ENCODE measurements at regions of chr1 and their contacts with region 1.

Region 1: DNA sequence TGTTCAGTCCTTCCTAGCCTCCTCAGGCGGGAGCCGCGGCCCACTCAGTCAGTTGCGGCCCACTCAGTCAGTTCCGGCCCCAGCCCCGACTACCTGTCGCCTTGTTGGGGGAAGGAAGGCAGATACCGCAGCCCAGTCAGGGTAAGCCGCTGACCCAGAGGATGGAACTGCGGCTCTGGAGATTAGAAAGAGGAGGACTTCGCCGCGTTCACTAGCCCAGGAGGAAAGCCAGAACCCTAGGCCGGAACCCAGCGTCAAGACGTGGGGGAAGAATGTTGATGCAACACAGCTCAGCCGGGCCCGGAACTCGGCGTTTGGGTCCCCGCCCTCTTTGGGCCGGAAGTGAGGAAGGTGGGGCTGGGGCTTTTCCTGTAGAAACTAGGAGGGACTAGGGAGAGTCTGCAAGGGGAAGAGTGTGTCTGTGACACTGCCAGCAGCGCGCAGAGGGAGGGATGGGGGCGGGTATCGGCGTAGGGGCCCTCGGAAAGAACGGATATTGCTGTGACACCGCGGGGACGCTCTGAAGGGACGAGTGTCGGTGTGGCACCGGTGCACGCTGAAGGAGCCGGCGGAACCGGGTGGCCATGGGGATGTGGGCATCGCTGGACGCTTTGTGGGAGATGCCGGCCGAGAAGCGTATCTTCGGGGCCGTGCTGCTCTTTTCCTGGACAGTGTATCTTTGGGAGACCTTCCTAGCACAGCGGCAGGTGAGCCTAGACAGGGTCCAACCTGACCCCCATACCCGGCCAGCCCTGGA is at the start of gene ZMPSTE24:
- DNase-seq: peak; percentile 92 to 99 (median 93)
- ATAC-seq: peak; percentile 98
- H3K4me3 ChIP-seq: peak within 1 kb of the TSS; percentile 95
- H3K27ac ChIP-seq: peak within 1 kb of the TSS; percentile 97
- H3K4me1 ChIP-seq: peaks cover 0 to 6% of the 10 kb centered on the region in 2 experiments; a peak in 4 of 5 replicates
- H3K27me3 ChIP-seq: no peaks in the 10 kb centered on the region; a peak in 1 of 5 replicates
- CTCF ChIP-seq: peak in 1 of 3 experiments; percentile 11; a peak in 2 of 6 replicates
- EP300 ChIP-seq: peak; percentile 75
- POLR2A ChIP-seq: peak; percentile 96
- RAD21 ChIP-seq: 0 out of 4 replicates have a peak, but pooled peaks of 1 of the 2 experiments have one; percentile 6
- polyA plus RNA-seq, gene ZMPSTE24: 73.5 to 75.9 TPM

Region 2: GRCh38 chr1:40161125-40161887 is 96.6 kb before region 1 on chr1 and contains the start of gene RLF:
- CTCF ChIA-PET with region 1: no interaction called
- POLR2A ChIA-PET with region 1: interaction called, 5 read pairs
- in situ Hi-C with region 1: no loop called
- intact Hi-C with region 1: loop called (anchors 2 kb)
- DNase-seq: peak; percentile 93 to 98 (median 95)
- ATAC-seq: peak; percentile 92
- H3K4me3 ChIP-seq: peak within 1 kb of the TSS; percentile 94
- H3K27ac ChIP-seq: peak within 1 kb of the TSS; percentile 89
- H3K4me1 ChIP-seq: peaks cover 4 to 24% of the 10 kb centered on the region in 2 experiments
- H3K27me3 ChIP-seq: no peaks in the 10 kb centered on the region
- CTCF ChIP-seq: peak in 1 of 3 experiments; percentile 12; a peak in 1 of 6 replicates
- EP300 ChIP-seq: peak; percentile 70
- POLR2A ChIP-seq: peak; percentile 95
- RAD21 ChIP-seq: no peak
- polyA plus RNA-seq, gene RLF: 3.6 to 5.6 TPM

Region 3: GRCh38 chr1:40247655-40248054 is 10.2 kb before region 1 on chr1 and contains the start of gene TMCO2:
- CTCF ChIA-PET with region 1: no interaction called
- POLR2A ChIA-PET with region 1: interaction called, 23 read pairs
- in situ Hi-C with region 1: no loop called
- intact Hi-C with region 1: no loop called
- DNase-seq: no peak
- ATAC-seq: no peak
- H3K4me3 ChIP-seq: no peak within 1 kb of the TSS
- H3K27ac ChIP-seq: no peak within 1 kb of the TSS
- H3K4me1 ChIP-seq: peaks cover 0 to 3% of the 10 kb centered on the region in 2 experiments; a peak in 2 of 5 replicates
- H3K27me3 ChIP-seq: no peaks in the 10 kb centered on the region
- CTCF ChIP-seq: no peak
- EP300 ChIP-seq: no peak
- POLR2A ChIP-seq: no peak
- RAD21 ChIP-seq: no peak
- polyA plus RNA-seq, gene TMCO2: not detected

Region 4: DNA sequence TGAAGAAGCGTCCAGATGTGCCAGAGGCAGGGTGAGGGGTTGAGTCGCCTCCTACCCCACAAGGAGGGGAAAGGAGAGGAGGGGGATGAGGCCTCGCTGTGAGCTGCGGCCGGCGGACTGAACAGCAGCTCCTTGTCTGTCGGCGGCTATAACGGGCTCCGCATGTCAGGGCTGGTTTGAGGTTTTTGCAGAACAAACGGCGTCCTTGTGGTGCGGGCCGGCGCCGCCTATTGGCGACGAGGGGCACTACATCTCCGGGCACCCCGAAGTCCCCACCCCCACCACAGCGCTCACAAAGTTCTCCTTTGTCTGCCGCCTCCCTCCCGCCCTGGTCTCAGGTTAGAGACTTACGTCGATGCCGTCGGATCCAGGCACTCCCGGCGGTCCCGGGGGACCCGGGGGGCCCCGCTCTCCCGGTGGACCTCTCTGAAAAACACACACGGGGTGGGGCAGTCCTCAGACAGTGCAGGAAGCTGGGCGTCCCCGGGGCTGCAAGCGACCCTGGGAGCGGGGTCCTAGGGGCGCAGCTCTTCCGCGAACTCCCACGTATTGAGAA is 57.5 kb after region 1 on chr1:
- CTCF ChIA-PET with region 1: no interaction called
- POLR2A ChIA-PET with region 1: no interaction called
- in situ Hi-C with region 1: no loop called
- intact Hi-C with region 1: no loop called
- DNase-seq: peak; percentile 90 to 93 (median 90)
- ATAC-seq: peak; percentile 87
- H3K4me3 ChIP-seq: no peak overlapping the region
- H3K27ac ChIP-seq: peak overlapping the region; percentile 31; the same call in 1 of the 3 replicates
- H3K4me1 ChIP-seq: peaks cover 36 to 67% of the 10 kb centered on the region in 2 experiments
- H3K27me3 ChIP-seq: no peaks in the 10 kb centered on the region
- CTCF ChIP-seq: peak; percentile 93 to 95 (median 95)
- EP300 ChIP-seq: 0 out of 2 replicates have a peak, but pooled peaks have one; percentile 21
- POLR2A ChIP-seq: peak; percentile 43; the same call in 1 of the 2 replicates
- RAD21 ChIP-seq: peak; percentile 64 to 85

Measured in K562 (cell line).